ENCODE measurements at regions of chr1 and their contacts with region 1.

Region 1: GRCh38 chr1:9494929-9495758 is 44.1 kb upstream of the SLC25A33 start:
- DNase-seq: peak; percentile 79 to 90 (median 86)
- ATAC-seq: peak; percentile 95
- H3K4me3 ChIP-seq: 0 out of 2 replicates have a peak overlapping the region, but pooled peaks have one; percentile 24
- H3K27ac ChIP-seq: no peak overlapping the region
- H3K4me1 ChIP-seq: peaks cover 4 to 8% of the 10 kb centered on the region in 2 experiments; a peak in 3 of 5 replicates
- H3K27me3 ChIP-seq: peaks cover 8 to 54% of the 10 kb centered on the region in 2 experiments; a peak in 4 of 5 replicates
- CTCF ChIP-seq: peak; percentile 96 to 98 (median 97)
- EP300 ChIP-seq: no peak
- POLR2A ChIP-seq: no peak
- RAD21 ChIP-seq: peak; percentile 79 to 96

Region 2: DNA sequence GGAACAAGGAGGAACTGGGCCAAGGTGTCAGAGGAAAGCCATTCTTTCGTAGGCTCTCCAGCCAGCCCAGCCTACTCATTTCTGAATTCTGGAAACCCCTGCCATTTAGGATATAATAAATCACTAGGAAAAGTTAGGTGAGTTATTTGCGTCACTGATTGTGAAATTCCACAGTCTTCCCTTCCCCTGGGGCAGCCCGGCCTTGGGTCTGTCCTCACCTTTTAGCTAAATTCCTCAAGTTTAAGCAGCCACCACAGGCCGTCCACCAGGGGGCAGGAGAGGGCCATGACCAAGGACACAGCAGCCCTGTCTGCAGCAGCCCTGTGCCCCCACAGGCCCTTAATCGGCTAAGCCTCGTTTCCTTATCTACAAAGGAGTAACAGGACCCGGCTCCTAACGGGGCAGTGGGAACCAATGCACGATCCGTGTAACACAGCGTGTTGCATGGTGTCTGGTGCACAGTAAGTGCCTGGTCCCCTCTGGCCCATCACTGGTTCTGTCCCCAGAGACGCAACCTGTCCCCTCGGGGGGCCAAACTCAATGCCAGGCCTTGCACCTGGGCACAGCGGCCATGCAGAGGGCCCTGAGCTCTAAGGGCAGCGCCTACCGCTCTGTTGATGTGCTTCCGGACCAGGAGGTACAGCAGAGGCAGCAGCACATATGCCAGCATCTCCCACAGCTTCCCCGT is 384.3 kb before region 1 on chr1:
- CTCF ChIA-PET with region 1: interaction called, 10 read pairs
- POLR2A ChIA-PET with region 1: interaction called, 3 read pairs
- in situ Hi-C with region 1: no loop called
- intact Hi-C with region 1: loop called (anchors 10 kb)
- DNase-seq: peak; percentile 82 to 90 (median 84)
- ATAC-seq: peak; percentile 96
- H3K4me3 ChIP-seq: no peak overlapping the region
- H3K27ac ChIP-seq: no peak overlapping the region
- H3K4me1 ChIP-seq: peaks cover 0 to 4% of the 10 kb centered on the region in 2 experiments; a peak in 1 of 5 replicates
- H3K27me3 ChIP-seq: peaks cover 27 to 71% of the 10 kb centered on the region in 2 experiments
- CTCF ChIP-seq: peak; percentile 95 to 98 (median 98)
- EP300 ChIP-seq: no peak
- POLR2A ChIP-seq: no peak
- RAD21 ChIP-seq: peak; percentile 95 to 97

Region 3: GRCh38 chr1:9292361-9293240 is 202.5 kb before region 1 on chr1 and contains the start of gene SPSB1:
- CTCF ChIA-PET with region 1: interaction called, 57 read pairs
- POLR2A ChIA-PET with region 1: no interaction called
- in situ Hi-C with region 1: loop called (anchors 5 kb)
- intact Hi-C with region 1: loop called (anchors 1 kb)
- DNase-seq: peak; percentile 71 to 86 (median 80)
- ATAC-seq: peak; percentile 86
- H3K4me3 ChIP-seq: peak within 1 kb of the TSS; percentile 34
- H3K27ac ChIP-seq: no peak within 1 kb of the TSS
- H3K4me1 ChIP-seq: peaks cover 3 to 20% of the 10 kb centered on the region in 2 experiments; a peak in 3 of 5 replicates
- H3K27me3 ChIP-seq: peaks cover 26 to 52% of the 10 kb centered on the region in 2 experiments
- CTCF ChIP-seq: 0 out of 6 replicates have a peak, but pooled peaks of 1 of the 3 experiments have one; percentile 20
- EP300 ChIP-seq: no peak
- POLR2A ChIP-seq: no peak
- RAD21 ChIP-seq: no peak
- polyA plus RNA-seq, gene SPSB1: 0.06 TPM in 1 of 2 experiments, not detected in the other

Region 4: GRCh38 chr1:9573723-9574122 is 78.6 kb after region 1 on chr1:
- CTCF ChIA-PET with region 1: interaction called, 40 read pairs
- POLR2A ChIA-PET with region 1: interaction called, 3 read pairs
- in situ Hi-C with region 1: loop called (anchors 5 kb)
- intact Hi-C with region 1: loop called (anchors 1 kb)
- DNase-seq: no peak
- ATAC-seq: 0 out of 3 replicates have a peak, but pooled peaks have one; percentile 42
- H3K4me3 ChIP-seq: no peak overlapping the region
- H3K27ac ChIP-seq: no peak overlapping the region
- H3K4me1 ChIP-seq: no peaks in the 10 kb centered on the region
- H3K27me3 ChIP-seq: no peaks in the 10 kb centered on the region
- CTCF ChIP-seq: peak; percentile 39 to 65 (median 41); a peak in 4 of 6 replicates
- EP300 ChIP-seq: no peak
- POLR2A ChIP-seq: no peak
- RAD21 ChIP-seq: peak; percentile 15 to 56

Region 5: DNA sequence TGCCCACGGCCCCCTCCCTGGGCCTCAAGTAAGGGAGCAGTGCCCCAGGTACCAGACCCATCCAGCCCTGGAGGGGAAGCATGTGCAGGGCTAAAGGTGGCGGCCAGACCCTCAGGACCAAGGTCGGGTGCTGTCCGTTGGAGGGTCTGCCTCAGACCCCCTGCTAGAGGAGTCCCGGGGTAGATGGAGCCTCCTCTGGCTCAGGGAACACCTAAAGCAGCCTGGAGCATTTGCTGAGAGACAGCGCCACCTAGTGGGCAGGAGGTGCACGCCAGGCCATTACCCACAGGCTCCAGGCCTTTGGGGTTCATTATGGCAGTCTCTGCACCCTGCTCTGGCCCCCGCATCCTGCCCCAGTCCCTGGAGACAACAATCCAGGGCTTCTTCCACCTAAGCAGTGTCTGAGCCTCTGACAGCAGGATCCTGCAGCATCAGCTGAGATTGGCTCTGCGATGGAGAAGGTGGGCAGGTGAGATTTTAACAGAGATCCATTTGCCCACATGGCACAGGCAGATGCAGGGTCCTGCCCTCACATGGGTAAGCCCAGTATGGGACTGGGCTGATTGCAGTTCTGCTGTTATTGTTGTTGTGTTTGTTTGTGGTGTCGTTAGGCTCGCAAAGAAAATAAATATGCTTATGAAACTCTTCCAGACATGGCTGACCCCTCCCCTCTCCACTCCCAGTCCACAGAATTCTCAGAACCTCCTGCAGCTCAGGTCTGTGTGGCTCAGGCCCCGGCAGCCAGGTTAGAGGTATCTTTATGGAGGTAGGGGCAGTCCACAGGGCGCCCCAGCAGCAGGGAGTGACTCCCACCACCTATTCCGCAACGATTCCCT is 372.5 kb after region 1 on chr1:
- CTCF ChIA-PET with region 1: interaction called, 7 read pairs
- POLR2A ChIA-PET with region 1: no interaction called
- in situ Hi-C with region 1: no loop called
- intact Hi-C with region 1: loop called (anchors 10 kb)
- DNase-seq: peak; percentile 84 to 92 (median 89)
- ATAC-seq: peak; percentile 99
- H3K4me3 ChIP-seq: no peak overlapping the region
- H3K27ac ChIP-seq: no peak overlapping the region
- H3K4me1 ChIP-seq: peaks cover 0 to 24% of the 10 kb centered on the region in 2 experiments; a peak in 2 of 5 replicates
- H3K27me3 ChIP-seq: no peaks in the 10 kb centered on the region
- CTCF ChIP-seq: peak; percentile 97 to 98 (median 98)
- EP300 ChIP-seq: no peak
- POLR2A ChIP-seq: no peak
- RAD21 ChIP-seq: peak; percentile 96 to 99